GM12878 (cell line): ENCODE measurements at regions of chr5 and their contacts with region 1.

Region 1: DNA sequence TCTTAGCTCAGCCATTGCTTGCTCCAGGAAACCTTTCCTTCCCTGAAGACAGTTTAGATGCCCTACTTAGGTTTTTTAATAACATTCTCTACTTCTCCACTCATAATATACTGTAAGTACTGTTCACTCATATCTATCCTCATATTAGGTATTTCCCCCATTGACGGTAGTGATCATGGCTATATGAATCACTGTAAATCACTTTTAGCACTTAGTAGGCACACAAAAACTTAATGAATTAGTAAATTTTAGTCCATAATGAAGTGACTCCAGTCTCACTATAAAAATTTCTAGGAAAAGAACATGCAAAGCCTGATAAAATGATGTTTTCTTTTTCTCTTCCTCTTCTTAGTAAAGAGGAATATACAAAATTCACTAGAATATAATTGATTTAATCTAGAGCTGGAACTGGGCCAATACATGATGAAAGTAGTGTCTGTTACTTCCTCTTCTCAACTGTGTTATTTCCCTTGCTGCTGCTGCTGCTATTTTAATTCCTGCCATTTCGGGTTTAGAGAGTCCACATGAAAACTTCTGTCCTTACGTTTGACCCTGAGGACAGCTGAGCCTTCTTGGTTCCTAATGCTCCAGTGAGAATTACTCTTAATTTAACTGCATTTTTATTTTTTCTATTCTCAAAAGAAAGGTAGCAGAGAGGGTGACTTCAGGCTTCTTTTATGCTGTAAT is 73.5 kb downstream of the LNPEP start:
- DNase-seq: peak; percentile 19
- ATAC-seq: peak; percentile 86
- H3K4me3 ChIP-seq: no peak overlapping the region
- H3K27ac ChIP-seq: peak overlapping the region; percentile 8; the same call in 1 of the 2 replicates
- H3K4me1 ChIP-seq: peaks cover 11% of the 10 kb centered on the region; the same call in 1 of the 2 replicates
- H3K27me3 ChIP-seq: no peaks in the 10 kb centered on the region
- CTCF ChIP-seq: no peak
- EP300 ChIP-seq: no peak
- POLR2A ChIP-seq: no peak
- RAD21 ChIP-seq: no peak

Region 2: DNA sequence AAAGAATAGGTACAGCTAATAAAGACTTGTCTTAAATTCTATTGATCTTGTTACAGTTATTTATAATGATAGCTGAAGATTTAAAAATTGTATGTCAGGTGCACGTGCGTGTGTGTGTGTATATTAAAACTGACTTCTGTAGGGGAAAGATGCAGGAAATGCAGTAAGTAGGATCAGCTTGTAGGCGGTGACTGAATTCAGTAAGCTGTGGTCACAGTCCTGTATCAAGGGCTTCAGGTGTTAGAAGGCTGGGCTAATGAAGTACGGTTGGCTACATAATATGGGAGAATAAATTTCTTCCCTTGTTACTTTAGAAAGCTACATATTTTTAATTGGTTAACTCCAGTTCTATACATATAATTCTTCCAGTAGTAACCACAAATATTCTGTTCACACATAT is 19.3 kb before region 1 on chr5:
- CTCF ChIA-PET with region 1: interaction called, 5 read pairs
- POLR2A ChIA-PET with region 1: no interaction called
- RAD21 ChIA-PET with region 1: no interaction called
- SMC1A ChIA-PET with region 1: interaction called, 10 read pairs
- in situ Hi-C with region 1: no loop called
- intact Hi-C with region 1: no loop called
- DNase-seq: no peak
- ATAC-seq: no peak
- H3K4me3 ChIP-seq: no peak overlapping the region
- H3K27ac ChIP-seq: no peak overlapping the region
- H3K4me1 ChIP-seq: no peaks in the 10 kb centered on the region
- H3K27me3 ChIP-seq: no peaks in the 10 kb centered on the region
- CTCF ChIP-seq: no peak
- EP300 ChIP-seq: no peak
- POLR2A ChIP-seq: no peak
- RAD21 ChIP-seq: no peak

Region 3: DNA sequence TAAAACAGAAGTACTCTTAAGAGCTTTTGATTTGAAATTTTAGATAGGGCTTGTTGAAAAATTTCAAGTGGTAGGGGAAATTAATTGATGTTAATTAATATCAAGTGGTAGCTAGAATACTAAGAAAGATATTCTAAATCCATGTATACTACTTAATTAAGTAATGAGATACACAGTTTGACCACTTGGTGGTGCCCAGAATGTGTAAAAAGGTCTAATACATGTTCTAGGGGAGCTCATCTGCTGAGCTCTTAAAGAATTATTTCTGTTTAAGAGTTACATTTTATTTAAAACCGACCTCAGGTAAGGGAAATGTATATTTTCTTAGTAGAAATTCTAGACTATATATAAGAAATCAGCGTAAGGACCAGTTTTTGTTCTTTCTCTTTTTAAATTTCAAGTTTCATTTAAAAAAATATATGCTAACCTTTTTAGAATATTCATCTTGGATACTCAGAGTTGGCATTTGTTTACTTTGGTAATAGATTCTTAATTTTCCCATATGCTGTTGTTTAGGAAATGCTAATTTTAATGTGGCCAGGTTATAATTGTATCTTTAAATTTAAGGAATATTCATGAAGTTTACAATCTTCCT is 12.0 kb before region 1 on chr5:
- CTCF ChIA-PET with region 1: interaction called, 20 read pairs
- POLR2A ChIA-PET with region 1: no interaction called
- RAD21 ChIA-PET with region 1: interaction called, 8 read pairs
- SMC1A ChIA-PET with region 1: interaction called, 12 read pairs
- in situ Hi-C with region 1: no loop called
- intact Hi-C with region 1: no loop called
- DNase-seq: no peak
- ATAC-seq: peak; percentile 92
- H3K4me3 ChIP-seq: no peak overlapping the region
- H3K27ac ChIP-seq: no peak overlapping the region
- H3K4me1 ChIP-seq: no peaks in the 10 kb centered on the region
- H3K27me3 ChIP-seq: no peaks in the 10 kb centered on the region
- CTCF ChIP-seq: peak; percentile 24 to 40 (median 40); a peak in 4 of 6 replicates
- EP300 ChIP-seq: no peak
- POLR2A ChIP-seq: no peak
- RAD21 ChIP-seq: peak; percentile 47

Region 4: GRCh38 chr5:97111616-97112015 is 102.3 kb after region 1 on chr5:
- CTCF ChIA-PET with region 1: no interaction called
- POLR2A ChIA-PET with region 1: no interaction called
- RAD21 ChIA-PET with region 1: no interaction called
- SMC1A ChIA-PET with region 1: no interaction called
- in situ Hi-C with region 1: no loop called
- intact Hi-C with region 1: no loop called
- DNase-seq: no peak
- ATAC-seq: no peak
- H3K4me3 ChIP-seq: no peak overlapping the region
- H3K27ac ChIP-seq: no peak overlapping the region
- H3K4me1 ChIP-seq: no peaks in the 10 kb centered on the region
- H3K27me3 ChIP-seq: no peaks in the 10 kb centered on the region
- CTCF ChIP-seq: no peak
- EP300 ChIP-seq: no peak
- POLR2A ChIP-seq: no peak
- RAD21 ChIP-seq: no peak

Region 5: GRCh38 chr5:98268162-98268860 is 1259.0 kb after region 1 on chr5:
- CTCF ChIA-PET with region 1: no interaction called
- POLR2A ChIA-PET with region 1: no interaction called
- RAD21 ChIA-PET with region 1: no interaction called
- SMC1A ChIA-PET with region 1: no interaction called
- in situ Hi-C with region 1: no loop called
- intact Hi-C with region 1: no loop called
- DNase-seq: no peak
- ATAC-seq: no peak
- H3K4me3 ChIP-seq: no peak overlapping the region
- H3K27ac ChIP-seq: no peak overlapping the region
- H3K4me1 ChIP-seq: no peaks in the 10 kb centered on the region
- H3K27me3 ChIP-seq: no peaks in the 10 kb centered on the region
- CTCF ChIP-seq: no peak
- EP300 ChIP-seq: no peak
- POLR2A ChIP-seq: no peak
- RAD21 ChIP-seq: no peak

Region 6: GRCh38 chr5:98880151-98880550 is 1870.8 kb after region 1 on chr5:
- CTCF ChIA-PET with region 1: no interaction called
- POLR2A ChIA-PET with region 1: no interaction called
- RAD21 ChIA-PET with region 1: no interaction called
- SMC1A ChIA-PET with region 1: no interaction called
- in situ Hi-C with region 1: loop called (anchors 25 kb)
- intact Hi-C with region 1: no loop called
- DNase-seq: no peak
- ATAC-seq: no peak
- H3K4me3 ChIP-seq: no peak overlapping the region
- H3K27ac ChIP-seq: no peak overlapping the region
- H3K4me1 ChIP-seq: 0 out of 2 replicates have a peak, but pooled peaks cover 2% of the 10 kb centered on the region
- H3K27me3 ChIP-seq: no peaks in the 10 kb centered on the region
- CTCF ChIP-seq: no peak
- EP300 ChIP-seq: no peak
- POLR2A ChIP-seq: no peak
- RAD21 ChIP-seq: no peak